ENCODE measurements at regions of chr1 and their contacts with region 1.

Region 1: DNA sequence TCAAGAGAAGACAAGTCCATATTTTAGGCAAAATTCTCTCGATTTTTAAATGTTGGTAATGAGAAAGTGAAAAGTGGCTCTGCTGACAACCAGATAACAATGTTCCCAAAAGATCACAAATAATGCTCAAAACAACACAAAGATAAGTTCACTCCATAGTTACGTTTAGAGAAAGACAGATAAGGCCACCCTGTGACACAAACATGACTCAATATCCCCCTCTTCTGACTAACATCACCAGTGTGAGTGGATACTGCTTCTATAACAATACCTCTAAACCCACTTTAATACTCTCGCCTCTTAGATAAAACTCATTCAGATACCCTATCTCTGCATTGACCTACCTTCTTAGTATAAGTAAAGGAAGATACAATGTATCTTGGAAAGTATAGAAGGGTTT is 51.2 kb upstream of the RGS7 start:
- DNase-seq: peak; percentile 43
- ATAC-seq: peak; percentile 17; the same call in 1 of the 2 replicates
- H3K4me3 ChIP-seq: no peak overlapping the region
- H3K27ac ChIP-seq: no peak overlapping the region
- H3K4me1 ChIP-seq: no peaks in the 10 kb centered on the region
- H3K27me3 ChIP-seq: no peaks in the 10 kb centered on the region
- CTCF ChIP-seq: peak; percentile 29; the same call in 1 of the 2 replicates
- POLR2A ChIP-seq: no peak
- RAD21 ChIP-seq: peak; percentile 38

Region 2: DNA sequence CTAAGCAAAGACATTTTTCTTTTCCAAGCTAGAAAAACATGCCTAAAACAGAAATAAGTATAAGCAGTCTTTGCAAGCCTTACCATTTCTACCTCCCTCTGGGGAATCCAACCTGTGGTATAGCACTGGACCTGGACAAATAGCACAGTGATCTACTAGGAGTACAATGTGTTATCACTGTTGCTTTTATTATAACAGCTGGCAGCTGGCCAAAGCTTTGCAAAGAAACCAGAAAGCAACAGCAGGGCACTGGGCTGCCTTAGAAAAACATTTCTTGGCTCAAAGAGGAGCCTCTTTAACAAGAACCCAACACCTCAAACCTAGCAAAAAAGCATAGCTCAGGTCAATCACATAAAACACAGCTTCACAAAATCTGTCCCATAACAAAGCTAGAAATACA is 501.7 kb before region 1 on chr1:
- CTCF ChIA-PET with region 1: no interaction called
- POLR2A ChIA-PET with region 1: no interaction called
- dilution Hi-C with region 1: no loop called
- in situ Hi-C with region 1: no loop called
- intact Hi-C with region 1: loop called (anchors 1 kb)
- DNase-seq: no peak
- ATAC-seq: no peak
- H3K4me3 ChIP-seq: no peak overlapping the region
- H3K27ac ChIP-seq: no peak overlapping the region
- H3K4me1 ChIP-seq: no peaks in the 10 kb centered on the region
- H3K27me3 ChIP-seq: no peaks in the 10 kb centered on the region
- CTCF ChIP-seq: no peak
- POLR2A ChIP-seq: no peak
- RAD21 ChIP-seq: no peak

Region 3: DNA sequence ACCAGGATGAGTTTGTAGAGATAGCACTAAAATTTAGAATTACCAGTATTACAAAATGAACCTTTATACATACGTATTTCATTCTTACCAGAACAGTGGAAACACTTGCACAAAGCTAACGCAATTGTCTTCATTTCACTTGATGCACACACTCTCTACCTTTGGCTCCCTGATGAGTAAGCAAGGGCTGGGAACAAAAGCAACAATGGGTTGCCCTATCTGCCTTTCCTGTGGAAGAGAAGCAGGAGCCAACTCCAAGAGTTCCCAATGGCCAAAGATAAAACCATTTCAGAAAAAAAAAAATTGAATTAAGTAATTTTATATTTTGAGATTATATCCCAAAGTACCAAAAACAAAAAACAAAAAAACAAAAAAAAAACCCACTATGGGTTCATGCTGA is 452.1 kb before region 1 on chr1:
- CTCF ChIA-PET with region 1: interaction called, 3 read pairs
- POLR2A ChIA-PET with region 1: no interaction called
- dilution Hi-C with region 1: no loop called
- in situ Hi-C with region 1: no loop called
- intact Hi-C with region 1: loop called (anchors 10 kb)
- DNase-seq: no peak
- ATAC-seq: no peak
- H3K4me3 ChIP-seq: no peak overlapping the region
- H3K27ac ChIP-seq: no peak overlapping the region
- H3K4me1 ChIP-seq: no peaks in the 10 kb centered on the region
- H3K27me3 ChIP-seq: no peaks in the 10 kb centered on the region; the same call in 1 of the 2 replicates
- CTCF ChIP-seq: no peak
- POLR2A ChIP-seq: no peak
- RAD21 ChIP-seq: no peak

Region 4: GRCh38 chr1:241275981-241276380 is 132.2 kb before region 1 on chr1:
- CTCF ChIA-PET with region 1: no interaction called
- POLR2A ChIA-PET with region 1: no interaction called
- dilution Hi-C with region 1: no loop called
- in situ Hi-C with region 1: no loop called
- intact Hi-C with region 1: no loop called
- DNase-seq: no peak
- ATAC-seq: no peak
- H3K4me3 ChIP-seq: no peak overlapping the region
- H3K27ac ChIP-seq: no peak overlapping the region
- H3K4me1 ChIP-seq: no peaks in the 10 kb centered on the region
- H3K27me3 ChIP-seq: no peaks in the 10 kb centered on the region
- CTCF ChIP-seq: no peak
- POLR2A ChIP-seq: no peak
- RAD21 ChIP-seq: no peak

Region 5: DNA sequence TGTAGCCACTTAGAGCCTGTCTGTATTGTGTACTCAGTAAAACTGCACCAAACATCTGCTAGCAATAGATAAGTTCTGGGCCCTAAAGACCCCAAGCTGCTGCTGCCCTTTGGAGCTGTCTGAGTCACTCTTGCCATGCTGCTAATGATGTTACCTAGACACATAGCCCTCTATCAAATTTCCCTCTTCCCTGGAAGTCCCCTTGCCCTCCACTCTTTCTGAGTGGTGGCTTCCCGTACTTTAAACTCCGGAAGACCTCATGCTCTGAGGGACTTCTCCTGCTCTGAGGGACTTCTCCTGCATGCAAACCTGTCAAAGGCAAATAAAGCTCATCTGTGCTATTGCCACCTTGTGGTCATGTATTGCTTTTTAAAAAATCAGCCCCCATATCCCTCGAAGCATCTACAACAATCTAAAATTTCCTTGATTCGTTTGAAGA is 77.4 kb after region 1 on chr1:
- CTCF ChIA-PET with region 1: no interaction called
- POLR2A ChIA-PET with region 1: no interaction called
- dilution Hi-C with region 1: no loop called
- in situ Hi-C with region 1: no loop called
- intact Hi-C with region 1: no loop called
- DNase-seq: peak; percentile 16
- ATAC-seq: peak; percentile 30; the same call in 1 of the 2 replicates
- H3K4me3 ChIP-seq: no peak overlapping the region
- H3K27ac ChIP-seq: no peak overlapping the region
- H3K4me1 ChIP-seq: peaks cover 6% of the 10 kb centered on the region
- H3K27me3 ChIP-seq: no peaks in the 10 kb centered on the region
- CTCF ChIP-seq: peak; percentile 33
- POLR2A ChIP-seq: no peak
- RAD21 ChIP-seq: peak; percentile 30; the same call in 1 of the 2 replicates